ENCODE measurements at regions of chr19 and their contacts with region 1.

Region 1: DNA sequence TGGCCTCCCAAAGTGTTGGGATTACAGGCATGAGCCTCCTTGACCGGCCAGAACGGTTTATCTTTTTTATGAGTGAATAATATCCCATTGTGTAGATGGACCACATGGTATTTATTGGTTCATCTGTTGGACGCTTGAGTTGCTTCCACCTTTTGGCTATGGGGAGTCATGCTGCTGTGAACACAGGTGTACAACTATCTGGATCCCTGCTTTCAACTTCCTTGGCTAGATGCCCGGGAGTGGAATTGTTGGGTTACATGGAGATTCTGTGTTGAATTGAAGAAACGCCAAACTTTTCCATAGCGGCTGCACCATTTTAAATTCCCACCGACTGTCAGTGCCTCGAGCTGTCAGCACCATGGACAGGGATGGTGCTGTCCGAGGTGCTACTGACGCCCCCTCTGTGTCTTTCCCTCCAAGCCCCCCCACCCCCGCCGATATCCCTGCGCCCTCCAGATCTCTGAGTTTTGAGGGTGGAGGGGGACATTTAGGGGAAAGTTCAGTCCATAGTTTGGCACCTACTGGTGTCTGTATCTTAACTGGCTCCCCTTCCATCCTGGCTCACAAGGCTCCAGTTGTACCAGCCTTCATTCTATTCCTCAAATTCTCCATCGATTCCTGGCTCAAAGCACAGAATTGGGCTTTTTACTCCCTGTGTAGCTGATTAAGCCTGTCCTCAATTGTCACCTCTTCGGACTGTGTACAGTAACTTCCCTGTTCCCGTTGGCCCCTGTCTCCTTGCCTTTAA is 27.3 kb downstream of the PNPLA6 start:
- DNase-seq: no peak
- H3K4me3 ChIP-seq: no peak overlapping the region
- H3K27ac ChIP-seq: no peak overlapping the region
- H3K4me1 ChIP-seq: no peaks in the 10 kb centered on the region
- H3K27me3 ChIP-seq: no peaks in the 10 kb centered on the region
- CTCF ChIP-seq: no peak
- EP300 ChIP-seq: no peak
- RAD21 ChIP-seq: no peak

Region 2: DNA sequence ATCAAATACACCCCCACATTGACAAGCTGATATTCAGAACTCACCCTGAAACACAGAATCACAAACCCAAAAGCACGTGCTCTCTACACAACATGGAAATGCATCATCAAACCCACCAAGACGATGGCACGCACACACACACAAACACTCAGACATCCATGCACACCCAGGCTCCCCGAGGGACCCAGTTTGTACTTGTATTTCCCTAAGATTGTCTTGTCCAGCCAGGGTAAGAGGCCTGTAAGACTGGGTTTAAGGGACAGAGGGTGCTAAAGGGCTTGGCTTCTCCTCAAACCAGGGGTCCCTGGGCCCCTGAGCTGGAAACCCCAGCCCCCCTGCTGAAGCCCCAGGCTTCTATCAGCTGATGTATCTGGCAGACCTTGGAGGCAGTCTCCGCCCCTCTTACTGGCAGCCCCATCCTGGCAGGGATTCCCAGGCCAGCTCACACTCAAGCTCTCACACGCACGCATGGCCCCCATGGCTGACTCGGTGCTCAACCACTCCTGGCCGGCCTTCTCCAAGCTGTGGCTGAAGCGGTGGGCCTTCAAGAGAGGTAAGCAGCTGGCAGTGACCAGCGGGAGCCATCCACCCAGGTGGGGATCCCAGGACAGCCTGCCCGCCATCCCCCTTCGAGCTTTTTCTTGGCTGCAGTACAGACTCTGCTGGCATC is 207.5 kb before region 1 on chr19:
- CTCF ChIA-PET with region 1: interaction called, 14 read pairs
- POLR2A ChIA-PET with region 1: no interaction called
- DNase-seq: no peak
- H3K4me3 ChIP-seq: no peak overlapping the region
- H3K27ac ChIP-seq: no peak overlapping the region
- H3K4me1 ChIP-seq: no peaks in the 10 kb centered on the region
- H3K27me3 ChIP-seq: no peaks in the 10 kb centered on the region
- CTCF ChIP-seq: no peak
- EP300 ChIP-seq: no peak
- RAD21 ChIP-seq: no peak

Region 3: DNA sequence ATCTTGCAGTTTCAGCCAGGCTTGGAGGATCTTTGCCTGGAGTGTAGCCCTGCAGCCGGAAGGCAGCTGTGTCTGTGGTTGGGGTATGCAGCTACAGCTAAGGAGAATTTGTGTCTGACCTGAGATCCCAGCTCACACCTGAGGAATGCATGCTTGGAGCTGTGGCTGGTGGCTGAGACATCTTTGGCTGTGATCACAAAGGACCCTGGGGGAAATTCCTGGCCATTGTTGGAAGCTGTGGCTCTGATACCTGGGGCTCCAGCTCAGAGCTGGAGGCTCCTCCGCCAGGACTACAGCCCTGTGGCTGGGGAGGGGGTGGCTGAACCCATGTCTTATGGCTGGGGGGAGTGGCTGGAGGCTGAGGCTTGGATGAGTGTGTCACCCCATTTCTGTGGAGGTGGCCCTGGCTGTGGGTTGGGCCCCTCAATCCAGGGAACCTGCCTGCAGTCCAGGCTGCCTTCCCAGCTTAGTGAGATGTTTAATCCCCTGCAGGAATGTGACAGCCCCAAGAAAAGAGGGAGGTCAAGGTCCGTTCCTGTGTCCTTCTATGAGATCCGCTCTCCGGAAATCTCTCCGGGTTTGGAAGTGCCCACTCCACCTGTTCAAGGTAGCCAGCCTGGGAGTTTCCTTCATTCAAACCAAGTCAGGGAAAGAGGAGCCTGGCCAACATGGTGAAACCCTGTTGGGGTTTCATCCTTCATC is 186.5 kb before region 1 on chr19:
- CTCF ChIA-PET with region 1: no interaction called
- POLR2A ChIA-PET with region 1: no interaction called
- DNase-seq: no peak
- H3K4me3 ChIP-seq: no peak overlapping the region
- H3K27ac ChIP-seq: no peak overlapping the region
- H3K4me1 ChIP-seq: no peaks in the 10 kb centered on the region
- H3K27me3 ChIP-seq: no peaks in the 10 kb centered on the region
- CTCF ChIP-seq: no peak
- EP300 ChIP-seq: no peak
- RAD21 ChIP-seq: no peak

Region 4: DNA sequence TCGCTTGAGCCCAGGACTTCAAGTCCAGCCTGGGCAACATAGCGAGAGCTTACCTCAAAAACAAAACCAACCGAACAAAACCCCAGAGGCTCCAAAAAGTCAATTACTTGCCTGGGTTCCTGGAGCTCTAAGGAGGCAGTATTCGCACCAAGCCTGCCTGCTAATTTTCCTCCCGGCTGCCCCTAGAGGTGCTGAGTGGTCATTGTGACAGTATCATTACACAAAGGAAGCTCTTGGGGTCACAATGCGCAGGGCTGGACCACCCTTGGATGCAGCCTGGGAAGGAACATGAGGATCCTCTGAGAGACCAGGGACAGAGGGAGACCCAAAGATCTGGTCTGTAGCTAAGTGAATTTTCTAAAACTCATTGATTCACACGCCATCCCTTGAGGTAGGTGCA is 65.5 kb before region 1 on chr19:
- CTCF ChIA-PET with region 1: no interaction called
- POLR2A ChIA-PET with region 1: no interaction called
- DNase-seq: no peak
- H3K4me3 ChIP-seq: no peak overlapping the region
- H3K27ac ChIP-seq: no peak overlapping the region
- H3K4me1 ChIP-seq: peaks cover 0 to 14% of the 10 kb centered on the region in 2 experiments; a peak in 1 of 4 replicates
- H3K27me3 ChIP-seq: 0 out of 2 replicates have a peak, but pooled peaks cover 6% of the 10 kb centered on the region
- CTCF ChIP-seq: peak; percentile 43
- EP300 ChIP-seq: no peak
- RAD21 ChIP-seq: no peak

Region 5: GRCh38 chr19:7529246-7529600 is 33.6 kb before region 1 on chr19:
- CTCF ChIA-PET with region 1: no interaction called
- POLR2A ChIA-PET with region 1: no interaction called
- DNase-seq: no peak
- H3K4me3 ChIP-seq: no peak overlapping the region
- H3K27ac ChIP-seq: no peak overlapping the region
- H3K4me1 ChIP-seq: peaks cover 0 to 9% of the 10 kb centered on the region in 2 experiments; a peak in 2 of 4 replicates
- H3K27me3 ChIP-seq: no peaks in the 10 kb centered on the region
- CTCF ChIP-seq: no peak
- EP300 ChIP-seq: no peak
- RAD21 ChIP-seq: no peak

Region 6: DNA sequence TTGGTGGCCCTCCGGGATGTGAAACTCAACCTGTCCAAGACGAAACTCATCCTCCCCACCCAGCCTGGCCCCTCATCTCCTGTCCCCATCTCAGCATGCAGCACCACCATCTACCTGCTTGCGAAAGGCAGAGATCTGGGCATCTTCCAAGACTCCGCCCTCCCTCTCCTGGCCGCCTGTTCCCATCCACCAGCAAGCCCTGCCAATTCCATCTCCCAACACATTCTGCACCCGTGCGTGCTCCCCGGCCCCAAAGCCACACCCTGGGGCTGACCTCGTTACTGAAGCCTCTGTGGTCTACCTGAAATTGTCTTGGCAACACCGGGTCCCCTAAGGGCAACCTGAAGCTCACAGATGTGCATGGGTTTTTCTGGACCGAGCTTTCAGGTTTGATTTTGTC is 19.6 kb after region 1 on chr19:
- CTCF ChIA-PET with region 1: interaction called, 43 read pairs
- POLR2A ChIA-PET with region 1: no interaction called
- DNase-seq: no peak
- H3K4me3 ChIP-seq: no peak overlapping the region
- H3K27ac ChIP-seq: no peak overlapping the region
- H3K4me1 ChIP-seq: no peaks in the 10 kb centered on the region
- H3K27me3 ChIP-seq: peaks cover 59% of the 10 kb centered on the region
- CTCF ChIP-seq: no peak
- EP300 ChIP-seq: no peak
- RAD21 ChIP-seq: no peak

Region 7: GRCh38 chr19:7605490-7606222 is 42.8 kb after region 1 on chr19:
- CTCF ChIA-PET with region 1: interaction called, 10 read pairs
- POLR2A ChIA-PET with region 1: interaction called, 5 read pairs
- DNase-seq: peak; percentile 78
- H3K4me3 ChIP-seq: no peak overlapping the region
- H3K27ac ChIP-seq: no peak overlapping the region; a peak in 1 of 4 replicates
- H3K4me1 ChIP-seq: peaks cover 0 to 8% of the 10 kb centered on the region in 2 experiments; a peak in 1 of 4 replicates
- H3K27me3 ChIP-seq: no peaks in the 10 kb centered on the region
- CTCF ChIP-seq: no peak
- EP300 ChIP-seq: no peak
- RAD21 ChIP-seq: no peak

Region 8: GRCh38 chr19:7652061-7652641 is 89.3 kb after region 1 on chr19:
- CTCF ChIA-PET with region 1: interaction called, 43 read pairs
- POLR2A ChIA-PET with region 1: no interaction called
- DNase-seq: peak; percentile 89
- H3K4me3 ChIP-seq: peak overlapping the region; percentile 23 to 61; a peak in 3 of 4 replicates
- H3K27ac ChIP-seq: no peak overlapping the region
- H3K4me1 ChIP-seq: peaks cover 0 to 3% of the 10 kb centered on the region in 2 experiments; a peak in 1 of 4 replicates
- H3K27me3 ChIP-seq: peaks cover 34% of the 10 kb centered on the region
- CTCF ChIP-seq: peak; percentile 99
- EP300 ChIP-seq: no peak
- RAD21 ChIP-seq: peak; percentile 62

Region 9: DNA sequence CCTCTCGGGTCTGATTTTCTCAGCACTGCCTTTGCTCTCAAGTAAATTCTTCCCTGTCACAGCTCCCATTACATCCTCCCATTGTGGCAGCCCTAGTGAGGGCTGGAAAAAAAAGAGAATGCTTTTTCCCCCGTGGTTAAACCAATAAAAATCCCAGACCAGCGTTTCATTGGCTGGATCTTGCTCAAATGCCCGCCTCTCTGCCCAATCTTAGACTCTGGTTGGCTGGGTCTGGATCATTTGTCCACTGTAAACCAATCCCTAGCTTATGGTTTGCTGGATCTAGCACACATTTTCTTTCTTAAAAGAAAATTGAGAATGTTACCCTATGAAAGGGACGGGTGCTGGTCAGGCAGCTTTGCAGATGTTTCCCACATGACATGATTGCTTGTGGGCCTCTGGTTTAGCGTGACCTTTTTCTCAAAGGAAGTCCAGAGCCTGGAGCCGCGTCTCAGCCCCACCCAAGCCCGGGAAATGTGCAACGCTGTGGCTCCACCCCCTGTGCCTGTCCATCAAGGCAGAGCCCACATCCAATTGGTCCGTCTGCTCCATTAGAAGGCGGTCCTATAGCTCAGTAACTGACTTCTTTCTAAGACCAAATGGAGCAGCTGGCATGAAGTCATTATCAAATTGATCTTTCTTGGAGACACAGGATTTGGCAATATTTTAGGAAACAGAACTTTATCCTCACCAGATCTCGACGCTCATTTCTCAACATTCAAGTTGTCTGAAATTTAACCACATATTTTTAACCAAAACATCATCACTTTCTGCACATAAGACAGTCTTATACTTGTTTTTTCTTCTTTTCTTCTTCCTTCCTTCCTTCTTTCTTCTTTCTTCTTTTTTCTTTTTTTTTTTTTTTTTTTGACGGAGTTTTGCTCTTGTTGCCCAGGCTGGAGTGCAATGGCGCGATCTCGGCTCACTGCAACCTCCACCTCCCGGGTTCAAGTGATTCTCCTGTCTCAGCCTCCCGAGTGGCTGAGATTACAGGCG is 111.5 kb after region 1 on chr19:
- CTCF ChIA-PET with region 1: interaction called, 22 read pairs
- POLR2A ChIA-PET with region 1: no interaction called
- DNase-seq: peak; percentile 81
- H3K4me3 ChIP-seq: no peak overlapping the region
- H3K27ac ChIP-seq: no peak overlapping the region
- H3K4me1 ChIP-seq: no peaks in the 10 kb centered on the region; a peak in 1 of 4 replicates
- H3K27me3 ChIP-seq: peaks cover 56% of the 10 kb centered on the region
- CTCF ChIP-seq: no peak
- EP300 ChIP-seq: no peak
- RAD21 ChIP-seq: no peak

Measured in SK-N-SH (cell line).